ENCODE measurements at regions of chr2 and their contacts with region 1.

Region 1: DNA sequence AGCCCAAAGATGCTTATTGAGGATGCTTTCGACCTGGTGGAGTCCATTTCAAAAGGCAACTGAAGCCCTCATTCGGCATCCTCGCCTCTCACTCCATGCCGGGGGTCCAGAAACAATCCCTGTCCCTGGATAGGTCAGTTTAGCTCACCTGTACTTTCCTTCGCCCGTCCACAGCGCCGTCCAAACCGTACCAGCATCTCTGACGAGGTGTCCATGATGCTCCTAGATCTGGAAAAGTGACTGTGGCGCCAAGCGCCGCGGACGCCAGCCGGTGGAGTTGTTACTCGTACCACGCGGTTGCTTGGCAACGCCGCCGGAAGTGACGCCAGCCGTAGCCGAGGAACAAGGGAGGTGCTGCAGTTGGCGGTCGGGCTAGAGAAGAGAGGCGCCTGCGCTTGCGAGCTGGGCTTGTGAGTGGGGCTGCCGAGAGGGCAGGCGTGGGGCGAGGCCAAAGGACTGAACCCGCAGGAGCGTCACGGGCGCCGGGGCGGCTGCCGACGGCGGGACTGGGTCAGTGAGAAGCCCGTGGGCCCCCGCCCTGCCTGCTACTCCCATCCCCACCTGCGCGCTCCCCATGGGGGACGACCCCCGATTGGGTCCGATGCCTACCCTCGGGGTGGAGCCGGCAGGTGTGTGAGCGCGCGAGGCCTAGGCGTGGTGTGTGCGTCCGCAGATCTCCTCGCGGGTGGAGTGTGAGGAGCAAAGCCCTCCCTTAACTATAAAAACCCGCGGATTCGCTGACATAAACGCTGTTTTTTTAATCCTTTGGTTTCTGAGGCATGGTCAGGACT is at the starts of genes CFAP210 and PHOSPHO2:
- DNase-seq: peak; percentile 100
- ATAC-seq: peak; percentile 99 to 100 (median 100)
- H3K4me3 ChIP-seq: peak within 1 kb of the TSS; percentile 74
- H3K27ac ChIP-seq: peak within 1 kb of the TSS; percentile 81
- H3K4me1 ChIP-seq: peaks cover 5% of the 10 kb centered on the region
- H3K27me3 ChIP-seq: no peaks in the 10 kb centered on the region
- CTCF ChIP-seq: no peak
- total RNA-seq, gene CFAP210: not detected
- total RNA-seq, gene PHOSPHO2: 0.86 to 2.3 (median 1.4) TPM

Region 2: DNA sequence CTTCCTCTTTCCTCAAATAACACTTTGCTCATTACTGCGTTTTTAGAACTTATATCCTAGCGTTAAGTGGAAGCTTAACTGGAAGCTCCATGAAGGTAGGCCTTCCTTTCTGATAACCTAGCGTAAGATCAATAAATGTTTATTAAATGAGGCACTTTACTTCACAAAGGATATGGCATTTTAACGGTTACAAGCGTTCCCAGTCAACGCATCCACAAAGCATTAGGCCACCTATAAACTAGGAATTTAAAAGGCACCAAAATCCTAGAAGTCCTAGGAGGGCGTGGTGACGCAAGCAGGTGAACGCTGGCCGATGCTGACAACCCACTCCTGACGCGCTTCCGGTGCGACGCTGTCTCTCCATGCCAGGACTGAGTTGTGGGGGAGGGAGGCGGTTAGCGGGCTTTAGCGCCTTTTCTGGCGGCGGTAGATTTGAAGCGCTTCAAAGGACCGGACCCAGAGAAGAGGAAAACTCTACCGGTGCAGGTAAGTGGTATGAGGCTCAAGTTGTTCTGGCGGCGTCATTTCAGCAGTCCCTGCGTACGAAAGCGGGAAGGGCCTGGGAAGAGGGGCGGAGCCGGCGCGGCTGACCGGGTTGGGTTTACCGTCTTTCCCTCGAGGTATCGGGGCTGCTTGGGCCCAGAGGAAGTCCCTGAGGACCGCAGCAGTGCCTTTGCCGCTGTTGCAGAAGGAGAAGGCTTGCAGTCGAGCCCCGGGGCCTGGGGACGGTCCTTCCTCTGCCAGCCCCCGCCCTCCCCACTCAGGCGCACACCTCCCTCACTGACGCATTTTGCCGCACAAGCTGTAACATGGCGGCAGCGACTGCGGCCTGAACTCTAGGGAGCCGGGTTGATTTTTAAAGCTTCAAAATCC is 110.1 kb before region 1 on chr2 and contains the start of gene PPIG:
- intact Hi-C with region 1: loop called in 1 of 2 experiments (anchors 10 kb)
- DNase-seq: peak; percentile 90 to 95
- ATAC-seq: peak; percentile 97 to 98 (median 98)
- H3K4me3 ChIP-seq: peak within 1 kb of the TSS; percentile 94
- H3K27ac ChIP-seq: peak within 1 kb of the TSS; percentile 97
- H3K4me1 ChIP-seq: peaks cover 30% of the 10 kb centered on the region
- H3K27me3 ChIP-seq: no peaks in the 10 kb centered on the region
- CTCF ChIP-seq: no peak
- total RNA-seq, gene PPIG: 36.8 to 49.6 (median 43.6) TPM

Region 3: GRCh38 chr2:169734169-169734847 is 40.0 kb after region 1 on chr2:
- intact Hi-C with region 1: loop called in 1 of 2 experiments (anchors 5 kb)
- DNase-seq: peak; percentile 27 to 56
- ATAC-seq: peak; percentile 58 to 69 (median 66)
- H3K4me3 ChIP-seq: peak overlapping the region; percentile 90
- H3K27ac ChIP-seq: peak overlapping the region; percentile 13
- H3K4me1 ChIP-seq: peaks cover 9% of the 10 kb centered on the region
- H3K27me3 ChIP-seq: no peaks in the 10 kb centered on the region
- CTCF ChIP-seq: no peak